SK-N-SH (cell line): ENCODE measurements at regions of chr2 and their contacts with region 1.

Region 1: DNA sequence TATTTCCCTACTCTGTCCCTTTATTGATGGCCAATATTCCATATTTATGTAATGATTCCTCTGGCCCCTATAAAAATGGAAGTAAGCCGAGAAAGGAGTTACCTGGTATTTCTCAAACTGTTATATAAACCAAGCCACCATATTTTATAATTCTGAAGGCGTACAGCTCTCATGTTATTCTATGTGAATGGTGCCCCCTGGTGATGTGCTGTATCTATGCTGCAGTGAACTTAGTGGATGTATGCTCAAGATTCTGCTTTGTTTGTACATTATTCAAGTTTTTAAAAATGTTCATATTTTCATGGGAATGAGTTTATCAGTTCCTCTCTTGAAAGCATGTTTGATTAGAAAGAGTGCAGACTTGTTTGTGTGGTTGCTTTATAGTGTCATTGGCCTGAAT is 194.5 kb upstream of the LRRTM1 start:
- DNase-seq: peak; percentile 30
- H3K4me3 ChIP-seq: no peak overlapping the region; a peak in 1 of 4 replicates
- H3K27ac ChIP-seq: no peak overlapping the region
- H3K4me1 ChIP-seq: peaks cover 0 to 11% of the 10 kb centered on the region in 2 experiments; a peak in 3 of 4 replicates
- H3K27me3 ChIP-seq: no peaks in the 10 kb centered on the region
- CTCF ChIP-seq: peak; percentile 88
- EP300 ChIP-seq: no peak
- RAD21 ChIP-seq: peak; percentile 96

Region 2: GRCh38 chr2:79938648-79939047 is 560.4 kb before region 1 on chr2:
- CTCF ChIA-PET with region 1: interaction called, 11 read pairs
- POLR2A ChIA-PET with region 1: no interaction called
- DNase-seq: no peak
- H3K4me3 ChIP-seq: no peak overlapping the region
- H3K27ac ChIP-seq: peak overlapping the region in 1 of 2 experiments; percentile 16; a peak in 1 of 4 replicates
- H3K4me1 ChIP-seq: peaks cover 0 to 2% of the 10 kb centered on the region in 2 experiments; a peak in 2 of 4 replicates
- H3K27me3 ChIP-seq: no peaks in the 10 kb centered on the region
- CTCF ChIP-seq: no peak
- EP300 ChIP-seq: peak in 1 of 2 experiments; percentile 45; a peak in 1 of 4 replicates
- RAD21 ChIP-seq: no peak

Region 3: DNA sequence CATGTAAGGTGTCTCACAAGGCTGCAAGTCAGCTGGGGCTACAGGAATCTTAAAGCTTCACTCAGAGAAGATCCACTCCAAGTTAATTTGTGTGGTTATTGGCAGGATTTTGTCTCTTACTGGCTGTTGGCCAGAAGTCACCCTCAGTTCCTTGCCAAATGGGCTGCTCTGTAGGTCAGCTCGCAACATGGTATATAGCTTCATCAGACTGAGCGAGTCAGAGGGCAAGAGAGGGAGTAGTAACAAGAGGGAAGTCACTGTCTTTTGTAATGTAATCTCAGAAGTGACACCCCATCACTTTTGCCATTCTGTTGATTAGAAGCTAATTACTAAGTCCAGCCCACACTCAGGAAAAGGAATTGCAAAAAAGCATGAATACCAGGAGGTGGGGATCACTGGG is 314.0 kb before region 1 on chr2:
- CTCF ChIA-PET with region 1: no interaction called
- POLR2A ChIA-PET with region 1: no interaction called
- DNase-seq: no peak
- H3K4me3 ChIP-seq: no peak overlapping the region
- H3K27ac ChIP-seq: no peak overlapping the region
- H3K4me1 ChIP-seq: no peaks in the 10 kb centered on the region
- H3K27me3 ChIP-seq: no peaks in the 10 kb centered on the region
- CTCF ChIP-seq: no peak
- EP300 ChIP-seq: no peak
- RAD21 ChIP-seq: no peak

Region 4: DNA sequence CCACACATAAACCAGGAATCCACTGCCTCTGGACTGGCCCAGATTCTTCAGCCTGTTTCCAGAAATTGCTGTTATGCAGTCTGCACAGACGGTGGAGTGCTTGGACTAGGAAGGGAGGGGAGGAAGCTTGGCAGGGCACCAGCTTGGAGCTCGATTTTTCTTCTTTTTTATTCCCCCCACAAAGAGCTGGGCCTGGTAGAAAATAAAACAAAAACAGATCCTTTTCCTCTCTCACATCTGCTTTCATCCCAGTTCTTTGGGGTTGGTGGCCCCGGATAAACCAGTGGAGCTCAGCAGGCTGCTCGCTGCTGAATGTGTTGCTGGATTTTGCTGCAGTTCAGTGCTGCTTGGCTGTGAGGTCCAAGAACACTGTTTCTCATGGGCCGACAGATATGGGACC is 210.5 kb before region 1 on chr2:
- CTCF ChIA-PET with region 1: interaction called, 12 read pairs
- POLR2A ChIA-PET with region 1: no interaction called
- DNase-seq: peak; percentile 29
- H3K4me3 ChIP-seq: no peak overlapping the region
- H3K27ac ChIP-seq: no peak overlapping the region
- H3K4me1 ChIP-seq: peaks cover 0 to 3% of the 10 kb centered on the region in 2 experiments; a peak in 1 of 4 replicates
- H3K27me3 ChIP-seq: no peaks in the 10 kb centered on the region
- CTCF ChIP-seq: peak; percentile 40
- EP300 ChIP-seq: no peak
- RAD21 ChIP-seq: peak; percentile 74

Region 5: DNA sequence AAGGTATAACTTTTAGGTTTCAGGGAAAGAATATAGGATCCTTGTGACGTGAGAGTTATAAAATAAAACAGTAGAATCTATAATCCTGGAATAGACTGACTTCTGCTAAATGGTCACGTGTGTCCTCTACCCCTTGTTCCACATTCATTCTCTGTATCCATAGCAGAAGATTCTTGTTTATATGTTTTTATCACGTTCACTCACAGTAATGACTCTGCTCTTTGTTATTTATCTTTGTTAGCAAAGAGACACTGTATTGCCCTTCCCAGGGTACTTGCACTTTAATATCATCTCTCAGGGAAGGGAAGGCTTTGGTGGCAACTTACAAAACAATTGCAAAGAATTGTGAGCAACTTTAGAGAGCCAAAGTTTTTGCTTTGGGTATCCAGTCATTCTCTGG is 11.6 kb after region 1 on chr2:
- CTCF ChIA-PET with region 1: interaction called, 18 read pairs
- POLR2A ChIA-PET with region 1: no interaction called
- DNase-seq: no peak
- H3K4me3 ChIP-seq: no peak overlapping the region
- H3K27ac ChIP-seq: no peak overlapping the region
- H3K4me1 ChIP-seq: no peaks in the 10 kb centered on the region
- H3K27me3 ChIP-seq: no peaks in the 10 kb centered on the region
- CTCF ChIP-seq: no peak
- EP300 ChIP-seq: no peak
- RAD21 ChIP-seq: no peak